GM10248 (cell line): ENCODE measurements at regions of chr5 and their contacts with region 1.

Region 1: GRCh38 chr5:157130925-157131324 is 11.7 kb downstream of the MED7 start:
- DNase-seq: no peak
- CTCF ChIP-seq: no peak

Region 2: GRCh38 chr5:156920042-156920860 is 210.7 kb before region 1 on chr5:
- CTCF ChIA-PET with region 1: interaction called, 14 read pairs
- POLR2A ChIA-PET with region 1: no interaction called
- DNase-seq: no peak
- CTCF ChIP-seq: no peak

Region 3: DNA sequence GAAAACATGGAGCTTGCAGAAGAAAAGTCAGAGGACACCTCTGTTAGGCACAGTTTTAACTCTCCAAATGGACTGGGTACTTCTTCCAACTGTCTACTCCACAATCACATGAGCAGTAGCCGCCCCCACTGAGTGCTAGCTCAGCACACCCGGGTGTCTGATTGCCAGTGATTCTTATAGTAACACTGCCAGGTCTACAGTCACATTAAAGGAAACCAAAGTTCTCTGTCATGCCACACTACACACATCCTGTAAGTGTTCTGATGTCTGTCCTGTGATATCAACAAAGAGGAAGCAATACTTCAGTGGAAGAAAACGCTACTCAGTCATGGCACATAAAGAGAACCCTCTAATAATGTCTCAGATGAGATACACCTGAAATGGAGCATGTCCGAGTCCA is 21.9 kb before region 1 on chr5 and contains the start of gene HAVCR2:
- CTCF ChIA-PET with region 1: interaction called, 11 read pairs
- POLR2A ChIA-PET with region 1: no interaction called
- DNase-seq: peak; percentile 47
- CTCF ChIP-seq: no peak

Region 4: GRCh38 chr5:157116483-157116954 is 14.4 kb before region 1 on chr5:
- CTCF ChIA-PET with region 1: interaction called, 28 read pairs
- POLR2A ChIA-PET with region 1: no interaction called
- DNase-seq: peak; percentile 59
- CTCF ChIP-seq: no peak

Region 5: DNA sequence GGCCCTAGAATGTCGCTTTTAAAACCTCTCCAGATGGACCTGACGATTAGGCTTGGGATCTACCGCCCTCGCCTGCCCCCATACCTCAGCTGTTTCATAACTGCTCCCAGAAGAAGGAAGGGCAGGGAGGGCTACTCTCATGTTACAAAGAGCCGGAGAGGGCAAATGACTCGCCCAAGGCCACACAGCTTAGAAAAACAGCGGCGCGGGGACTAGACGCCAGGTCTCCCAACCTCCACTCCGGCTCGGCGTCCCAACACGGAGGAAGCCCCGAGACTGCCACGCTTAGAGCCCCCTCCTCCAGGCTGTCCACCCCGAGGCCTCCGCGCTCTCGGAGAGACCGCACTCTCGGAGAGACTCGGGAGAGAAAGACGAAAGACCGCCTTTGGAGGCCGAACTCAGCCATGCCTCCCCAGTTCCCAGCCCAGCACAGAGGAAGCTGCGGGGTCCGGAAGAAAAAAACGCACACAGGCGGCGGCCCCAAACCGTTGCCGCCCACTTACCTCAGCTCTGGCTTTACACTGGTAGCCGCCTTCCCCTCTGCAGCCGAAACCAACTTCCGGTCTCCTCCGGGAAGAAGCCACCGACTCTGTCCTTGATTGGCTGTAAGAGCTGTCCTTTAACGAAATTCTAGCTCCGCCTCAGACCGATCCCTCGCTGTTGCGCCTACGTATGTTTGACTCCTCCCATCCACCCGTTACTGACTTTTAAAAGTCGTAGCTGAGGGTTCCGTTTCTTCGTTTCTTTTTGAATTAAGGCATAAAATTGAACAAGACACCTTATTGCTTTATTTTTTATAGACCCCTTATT is 11.6 kb after region 1 on chr5 and contains the start of gene MED7:
- CTCF ChIA-PET with region 1: interaction called, 31 read pairs
- POLR2A ChIA-PET with region 1: interaction called, 6 read pairs
- DNase-seq: peak; percentile 97
- CTCF ChIP-seq: no peak